ENCODE measurements at regions of chr11 and their contacts with region 1.

Region 1: GRCh38 chr11:65013692-65014145 is 241 bp upstream of the ARL2 start:
- DNase-seq: peak; percentile 95 to 96 (median 96)
- H3K4me3 ChIP-seq: peak overlapping the region; percentile 65 to 82 (median 70)
- H3K27ac ChIP-seq: peak overlapping the region; percentile 90 to 93
- H3K4me1 ChIP-seq: peaks cover 0 to 27% (median 24%) of the 10 kb centered on the region in 4 experiments
- H3K27me3 ChIP-seq: no peaks in the 10 kb centered on the region

Region 2: DNA sequence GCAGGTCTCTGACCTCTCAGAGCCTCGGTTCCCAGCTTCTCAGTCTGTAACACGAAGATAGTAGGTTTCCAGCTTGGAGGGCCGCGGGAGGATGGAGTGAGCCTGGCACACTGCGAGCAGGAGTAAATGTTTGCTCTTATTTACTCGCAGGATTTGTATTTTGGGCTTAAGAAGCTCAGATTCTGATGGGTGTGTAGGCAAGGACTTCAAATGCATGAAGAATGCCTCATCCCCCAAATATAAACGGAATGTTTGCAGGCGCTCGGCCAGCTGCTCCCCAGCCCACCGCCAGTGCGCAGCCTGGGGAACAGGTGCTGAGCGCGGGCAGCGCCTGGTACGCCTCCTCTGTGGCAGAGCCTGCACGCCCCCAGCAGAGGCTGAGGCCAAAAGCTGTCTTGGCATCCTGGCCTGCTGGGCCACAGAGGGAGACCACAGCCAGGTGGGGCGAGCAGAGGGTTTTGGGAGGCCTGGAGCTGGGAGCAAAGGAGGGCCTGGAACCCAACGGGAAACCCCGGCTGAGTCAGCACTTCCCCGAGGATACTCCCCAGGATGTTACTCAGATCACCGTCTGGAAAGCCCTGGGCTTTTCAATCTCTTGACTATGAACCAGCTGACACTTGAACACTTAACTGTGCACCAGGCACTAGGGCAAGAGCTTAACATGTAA is 144.7 kb before region 1 on chr11:
- CTCF ChIA-PET with region 1: no interaction called
- POLR2A ChIA-PET with region 1: no interaction called
- DNase-seq: no peak
- H3K4me3 ChIP-seq: no peak overlapping the region
- H3K27ac ChIP-seq: peak overlapping the region in 1 of 2 experiments; percentile 71
- H3K4me1 ChIP-seq: peaks cover 2 to 45% (median 42%) of the 10 kb centered on the region in 4 experiments
- H3K27me3 ChIP-seq: no peaks in the 10 kb centered on the region

Region 3: DNA sequence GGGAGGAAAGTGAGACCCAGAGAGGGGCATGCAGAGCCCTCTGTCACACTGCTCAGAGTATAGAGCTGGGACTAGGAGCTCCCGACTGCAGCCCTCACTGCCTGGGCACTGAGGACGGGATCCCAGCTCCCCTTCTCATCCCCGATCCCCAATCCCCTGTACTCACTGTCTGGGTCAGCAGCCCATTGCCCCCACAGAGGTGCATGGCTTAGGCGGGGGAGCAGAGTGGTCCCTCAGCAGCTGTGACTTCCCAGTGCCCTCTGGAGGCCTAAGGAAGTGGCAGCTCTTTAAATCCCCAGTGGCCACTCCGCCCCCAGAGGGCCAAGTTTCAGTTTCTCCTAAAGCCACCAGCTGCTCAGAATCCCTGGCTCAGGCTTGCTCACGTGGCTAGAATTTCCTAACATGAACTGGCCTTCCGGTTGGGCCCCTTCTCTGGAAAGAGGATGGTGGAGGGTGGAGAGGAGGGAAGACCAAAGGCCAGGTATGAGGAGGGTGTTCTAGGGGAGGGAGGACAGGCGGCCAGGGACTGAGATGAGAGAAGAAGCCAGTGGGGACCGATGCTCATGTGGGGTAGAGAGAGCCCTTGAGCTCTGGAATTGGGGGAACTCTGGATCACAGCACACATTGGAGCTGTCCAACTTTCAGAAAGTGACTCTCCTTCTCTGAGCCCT is 16.9 kb before region 1 on chr11 and contains the start of gene BATF2:
- CTCF ChIA-PET with region 1: interaction called, 41 read pairs
- POLR2A ChIA-PET with region 1: no interaction called
- DNase-seq: peak; percentile 56 to 72 (median 70)
- H3K4me3 ChIP-seq: peak within 1 kb of the TSS in 5 of 7 experiments; percentile 8 to 78 (median 64)
- H3K27ac ChIP-seq: peak within 1 kb of the TSS in 1 of 2 experiments; percentile 10
- H3K4me1 ChIP-seq: peaks cover 0 to 14% (median 11%) of the 10 kb centered on the region in 4 experiments
- H3K27me3 ChIP-seq: peaks cover 0 to 5% (median 0%) of the 10 kb centered on the region in 5 experiments

Region 4: DNA sequence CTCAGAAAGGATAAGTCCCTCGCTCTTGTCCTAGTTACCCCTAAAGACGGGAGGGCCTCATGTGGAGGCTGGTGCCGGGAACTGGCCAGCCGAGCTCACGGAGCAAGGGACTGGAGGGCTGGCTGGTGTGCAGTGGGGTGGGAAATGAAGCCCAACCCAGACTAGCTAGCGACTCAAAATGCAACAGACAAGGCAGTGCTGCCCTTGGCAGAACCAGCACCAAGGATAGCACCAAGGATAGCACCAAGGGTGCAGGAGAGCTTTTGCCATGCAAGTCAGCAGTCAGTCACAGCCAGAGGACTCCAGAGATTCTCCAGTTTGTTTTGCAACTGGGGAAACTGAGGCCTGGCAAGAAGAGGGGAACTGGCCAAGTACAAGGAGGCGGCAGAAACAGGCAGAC is 10.4 kb before region 1 on chr11:
- CTCF ChIA-PET with region 1: interaction called, 41 read pairs
- POLR2A ChIA-PET with region 1: interaction called, 5 read pairs
- DNase-seq: no peak
- H3K4me3 ChIP-seq: no peak overlapping the region
- H3K27ac ChIP-seq: no peak overlapping the region
- H3K4me1 ChIP-seq: peaks cover 0 to 2% (median 0%) of the 10 kb centered on the region in 4 experiments
- H3K27me3 ChIP-seq: no peaks in the 10 kb centered on the region

Region 5: GRCh38 chr11:65027213-65028067 is 13.7 kb after region 1 on chr11 and contains the start of gene SNX15:
- CTCF ChIA-PET with region 1: interaction called, 21 read pairs
- POLR2A ChIA-PET with region 1: interaction called, 5 read pairs
- DNase-seq: peak; percentile 97 to 98 (median 98)
- H3K4me3 ChIP-seq: peak within 1 kb of the TSS in 6 of 7 experiments; percentile 36 to 73 (median 59)
- H3K27ac ChIP-seq: peak within 1 kb of the TSS in 1 of 2 experiments; percentile 71
- H3K4me1 ChIP-seq: peaks cover 6 to 18% (median 16%) of the 10 kb centered on the region in 4 experiments
- H3K27me3 ChIP-seq: no peaks in the 10 kb centered on the region

Region 6: DNA sequence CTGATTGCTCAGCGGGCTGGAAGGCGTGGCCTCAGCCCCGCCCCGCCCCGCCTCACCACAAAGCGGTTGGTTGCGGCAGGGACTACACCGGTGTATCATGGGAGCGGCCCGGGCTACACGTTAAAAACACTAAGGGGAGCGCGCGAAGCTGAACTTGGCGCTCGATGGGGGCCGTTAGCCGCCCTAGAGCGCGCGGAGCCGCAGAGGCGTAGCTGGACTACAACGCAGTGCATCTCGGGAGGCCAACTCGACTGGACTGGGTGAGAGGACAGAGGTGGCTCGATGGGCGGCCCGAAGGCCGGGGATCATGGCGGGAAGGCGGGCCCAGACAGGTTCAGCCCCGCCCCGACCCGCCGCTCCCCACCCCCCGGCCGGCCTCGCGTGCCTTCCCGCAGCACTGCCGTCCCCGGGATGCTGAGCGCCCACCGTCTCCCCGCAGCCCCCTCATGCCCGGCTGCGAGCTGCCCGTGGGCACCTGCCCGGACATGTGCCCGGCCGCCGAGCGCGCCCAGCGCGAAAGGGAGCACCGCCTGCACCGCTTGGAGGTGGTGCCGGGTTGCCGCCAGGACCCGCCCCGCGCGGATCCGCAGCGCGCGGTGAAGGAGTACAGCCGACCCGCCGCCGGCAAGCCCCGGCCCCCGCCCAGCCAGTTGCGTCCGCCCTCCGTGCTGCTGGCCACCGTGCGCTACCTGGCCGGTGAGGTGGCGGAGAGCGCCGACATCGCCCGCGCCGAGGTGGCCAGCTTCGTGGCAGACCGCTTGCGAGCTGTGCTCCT is 27.3 kb after region 1 on chr11 and contains the start of gene SAC3D1:
- CTCF ChIA-PET with region 1: interaction called, 13 read pairs
- POLR2A ChIA-PET with region 1: no interaction called
- DNase-seq: peak; percentile 93 to 97 (median 96)
- H3K4me3 ChIP-seq: peak within 1 kb of the TSS; percentile 59 to 85 (median 76)
- H3K27ac ChIP-seq: peak within 1 kb of the TSS in 1 of 2 experiments; percentile 75
- H3K4me1 ChIP-seq: peaks cover 2 to 39% (median 27%) of the 10 kb centered on the region in 4 experiments
- H3K27me3 ChIP-seq: no peaks in the 10 kb centered on the region

Measured in common myeloid progenitor, CD34-positive (primary cell).